Caco-2 (cell line): ENCODE measurements at regions of chr7 and their contacts with region 1.

Region 1: DNA sequence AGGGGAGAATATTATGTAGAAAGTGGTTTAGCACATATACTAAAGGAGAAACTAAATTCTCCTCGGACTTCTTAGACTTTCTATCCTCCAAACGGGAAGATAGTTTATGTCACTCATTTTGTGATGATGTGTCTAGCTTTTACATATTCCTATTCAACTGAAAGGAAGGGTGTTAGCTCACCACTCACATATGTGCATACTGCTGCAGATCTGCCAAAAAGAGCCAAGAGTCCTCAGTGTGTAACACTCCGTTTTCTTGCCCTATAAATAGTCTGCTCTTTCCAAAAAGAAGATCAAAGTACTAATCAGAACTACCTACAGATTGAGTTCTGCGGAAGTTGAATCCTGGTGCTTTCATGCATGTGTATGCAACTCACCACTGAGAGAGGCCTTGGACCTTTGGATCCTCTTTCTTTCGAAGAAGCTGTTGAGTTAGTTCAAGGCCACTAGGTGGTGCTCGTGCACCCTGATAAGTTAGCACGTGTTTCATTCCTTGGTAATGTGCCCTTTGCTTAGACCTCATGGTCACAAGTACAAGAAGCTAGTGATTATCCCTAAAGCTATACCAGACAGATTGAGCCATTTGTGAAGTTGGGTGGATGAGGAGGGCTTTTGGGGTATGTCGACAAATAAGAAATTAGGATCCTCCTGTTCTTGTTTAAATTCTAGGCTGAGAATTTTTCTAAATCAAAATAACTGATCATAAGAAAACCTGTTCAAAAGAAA is 14.1 kb downstream of the YAE1 start:
- DNase-seq: peak; percentile 77 to 78
- H3K4me3 ChIP-seq: no peak overlapping the region
- H3K4me3 Mint-ChIP-seq: no peak overlapping the region
- H3K27ac Mint-ChIP-seq: no peak overlapping the region
- H3K4me1 ChIP-seq: no peaks in the 10 kb centered on the region; the same call in 1 of the 2 replicates
- H3K4me1 Mint-ChIP-seq: no peaks in the 10 kb centered on the region
- H3K27me3 ChIP-seq: no peaks in the 10 kb centered on the region
- H3K27me3 Mint-ChIP-seq: no peaks in the 10 kb centered on the region
- CTCF ChIP-seq: peak; percentile 74 to 80

Region 2: GRCh38 chr7:39566023-39566921 is 14.0 kb before region 1 on chr7 and contains the start of gene YAE1:
- CTCF ChIA-PET with region 1: interaction called, 17 read pairs
- POLR2A ChIA-PET with region 1: no interaction called
- intact Hi-C with region 1: no loop called
- DNase-seq: peak; percentile 82 to 85
- H3K4me3 ChIP-seq: peak within 1 kb of the TSS; percentile 95
- H3K4me3 Mint-ChIP-seq: peak within 1 kb of the TSS; percentile 98
- H3K27ac Mint-ChIP-seq: peak within 1 kb of the TSS; percentile 96
- H3K4me1 ChIP-seq: 0 out of 2 replicates have a peak, but pooled peaks cover 4% of the 10 kb centered on the region
- H3K4me1 Mint-ChIP-seq: no peaks in the 10 kb centered on the region
- H3K27me3 ChIP-seq: no peaks in the 10 kb centered on the region
- H3K27me3 Mint-ChIP-seq: no peaks in the 10 kb centered on the region
- CTCF ChIP-seq: no peak
- total RNA-seq, gene YAE1: 22.4 and 22.7 TPM in 2 replicates

Region 3: GRCh38 chr7:39623018-39623731 is 42.9 kb after region 1 on chr7 and contains the start of gene RALA:
- CTCF ChIA-PET with region 1: interaction called, 12 read pairs
- POLR2A ChIA-PET with region 1: interaction called, 13 read pairs
- intact Hi-C with region 1: loop called (anchors 1 kb)
- DNase-seq: peak; percentile 95
- H3K4me3 ChIP-seq: peak within 1 kb of the TSS; percentile 90
- H3K4me3 Mint-ChIP-seq: peak within 1 kb of the TSS; percentile 84
- H3K27ac Mint-ChIP-seq: peak within 1 kb of the TSS; percentile 88
- H3K4me1 ChIP-seq: peaks cover 25% of the 10 kb centered on the region
- H3K4me1 Mint-ChIP-seq: peaks cover 53% of the 10 kb centered on the region
- H3K27me3 ChIP-seq: no peaks in the 10 kb centered on the region
- H3K27me3 Mint-ChIP-seq: no peaks in the 10 kb centered on the region
- CTCF ChIP-seq: no peak
- total RNA-seq, gene RALA: 41.7 and 43.5 TPM in 2 replicates

Region 4: GRCh38 chr7:39746103-39746819 is 165.9 kb after region 1 on chr7:
- CTCF ChIA-PET with region 1: interaction called, 123 read pairs
- POLR2A ChIA-PET with region 1: interaction called, 4 read pairs
- intact Hi-C with region 1: loop called (anchors 1 kb)
- DNase-seq: peak; percentile 76 to 80
- H3K4me3 ChIP-seq: no peak overlapping the region
- H3K4me3 Mint-ChIP-seq: no peak overlapping the region
- H3K27ac Mint-ChIP-seq: no peak overlapping the region
- H3K4me1 ChIP-seq: peaks cover 14% of the 10 kb centered on the region
- H3K4me1 Mint-ChIP-seq: peaks cover 13% of the 10 kb centered on the region
- H3K27me3 ChIP-seq: no peaks in the 10 kb centered on the region
- H3K27me3 Mint-ChIP-seq: no peaks in the 10 kb centered on the region
- CTCF ChIP-seq: peak; percentile 79 to 83

Region 5: GRCh38 chr7:40057292-40057691 is 477.0 kb after region 1 on chr7:
- CTCF ChIA-PET with region 1: interaction called, 10 read pairs
- POLR2A ChIA-PET with region 1: no interaction called
- intact Hi-C with region 1: loop called (anchors 10 kb)
- DNase-seq: no peak
- H3K4me3 ChIP-seq: no peak overlapping the region
- H3K4me3 Mint-ChIP-seq: no peak overlapping the region
- H3K27ac Mint-ChIP-seq: no peak overlapping the region
- H3K4me1 ChIP-seq: peaks cover 9% of the 10 kb centered on the region
- H3K4me1 Mint-ChIP-seq: peaks cover 11% of the 10 kb centered on the region
- H3K27me3 ChIP-seq: no peaks in the 10 kb centered on the region
- H3K27me3 Mint-ChIP-seq: no peaks in the 10 kb centered on the region
- CTCF ChIP-seq: no peak